HepG2 (cell line): ENCODE measurements at regions of chr3 and their contacts with region 1.

Region 1: GRCh38 chr3:17333446-17333845 is 409.0 kb downstream of the TBC1D5 start:
- DNase-seq: no peak
- ATAC-seq: no peak
- H3K4me3 ChIP-seq: no peak overlapping the region
- H3K27ac ChIP-seq: no peak overlapping the region
- H3K4me1 ChIP-seq: no peaks in the 10 kb centered on the region
- H3K27me3 ChIP-seq: no peaks in the 10 kb centered on the region
- CTCF ChIP-seq: no peak
- EP300 ChIP-seq: no peak
- POLR2A ChIP-seq: no peak
- RAD21 ChIP-seq: no peak

Region 2: GRCh38 chr3:17278006-17278405 is 55.4 kb before region 1 on chr3:
- CTCF ChIA-PET with region 1: no interaction called
- POLR2A ChIA-PET with region 1: no interaction called
- in situ Hi-C with region 1: no loop called
- intact Hi-C with region 1: loop called (anchors 2 kb)
- DNase-seq: no peak
- ATAC-seq: no peak
- H3K4me3 ChIP-seq: no peak overlapping the region
- H3K27ac ChIP-seq: no peak overlapping the region
- H3K4me1 ChIP-seq: no peaks in the 10 kb centered on the region
- H3K27me3 ChIP-seq: no peaks in the 10 kb centered on the region
- CTCF ChIP-seq: no peak
- EP300 ChIP-seq: no peak
- POLR2A ChIP-seq: no peak
- RAD21 ChIP-seq: no peak

Region 3: DNA sequence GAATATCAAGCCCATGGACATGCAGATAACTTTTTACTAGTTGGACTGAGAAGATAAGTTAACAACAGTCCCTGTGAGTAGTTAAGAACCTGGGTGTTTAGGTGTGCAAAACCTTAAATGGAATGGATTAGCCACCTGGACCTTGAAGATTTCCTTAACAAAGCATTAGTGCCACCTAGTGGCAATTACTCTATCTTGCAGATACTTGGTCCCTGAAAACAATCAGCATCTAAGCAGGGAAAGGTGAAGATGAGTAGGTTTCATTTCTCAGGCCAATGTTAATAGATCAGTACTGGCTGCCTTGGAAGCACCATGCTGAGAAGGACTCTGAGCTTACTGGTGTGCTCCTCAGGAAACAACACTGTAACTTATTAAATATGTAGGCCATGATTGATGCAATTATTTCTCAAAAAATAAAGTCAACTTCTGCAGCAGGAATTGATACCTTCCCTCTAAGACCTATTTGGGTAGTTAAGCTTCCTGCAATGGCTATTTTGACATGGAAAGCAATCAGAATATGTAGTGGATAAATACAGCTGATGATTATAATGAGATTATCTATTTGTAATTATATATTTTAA is 79.6 kb after region 1 on chr3:
- CTCF ChIA-PET with region 1: no interaction called
- POLR2A ChIA-PET with region 1: no interaction called
- in situ Hi-C with region 1: no loop called
- intact Hi-C with region 1: no loop called
- DNase-seq: peak; percentile 64
- ATAC-seq: peak; percentile 82
- H3K4me3 ChIP-seq: no peak overlapping the region
- H3K27ac ChIP-seq: no peak overlapping the region
- H3K4me1 ChIP-seq: no peaks in the 10 kb centered on the region
- H3K27me3 ChIP-seq: no peaks in the 10 kb centered on the region
- CTCF ChIP-seq: peak; percentile 84
- EP300 ChIP-seq: no peak
- POLR2A ChIP-seq: no peak
- RAD21 ChIP-seq: peak; percentile 62